ENCODE measurements at regions of chr9 and their contacts with region 1.

Region 1: DNA sequence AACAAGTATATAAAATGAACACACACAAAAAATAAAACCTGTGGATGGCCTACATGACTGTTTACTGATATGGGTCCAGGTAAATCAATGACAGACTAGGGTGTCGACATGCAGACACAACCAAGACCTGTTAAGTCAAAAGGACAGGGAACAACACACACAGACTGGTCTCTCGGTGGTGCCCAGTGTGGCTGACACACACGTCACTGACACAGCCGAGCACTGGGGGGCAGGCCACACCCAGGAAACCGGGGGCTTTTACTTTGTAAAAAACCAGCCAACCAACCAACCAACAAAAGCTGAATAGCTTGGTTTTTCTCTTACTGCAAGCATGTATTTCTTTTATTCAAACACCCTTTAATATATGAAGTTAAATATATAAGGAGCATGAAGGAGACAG is 5.0 kb downstream of the FAM163B start:
- DNase-seq: peak in 6 of 9 donors; percentile 10 to 33 (median 24)
- ATAC-seq: no peak
- H3K4me3 ChIP-seq: no peak overlapping the region
- H3K4me3 Mint-ChIP-seq: no peak overlapping the region
- H3K27ac ChIP-seq: no peak overlapping the region
- H3K27ac Mint-ChIP-seq: peak overlapping the region in 2 of 9 donors; percentile 20 to 38
- H3K4me1 ChIP-seq: no peaks in the 10 kb centered on the region
- H3K4me1 Mint-ChIP-seq: peaks cover 0 to 11% (median 8%) of the 10 kb centered on the region in 7 donors
- H3K27me3 ChIP-seq: peaks cover 0 to 7% of the 10 kb centered on the region in 2 donors
- H3K27me3 Mint-ChIP-seq: peaks cover 6 to 17% (median 14%) of the 10 kb centered on the region in 5 donors

Region 2: GRCh38 chr9:133715866-133716563 is 111.8 kb after region 1 on chr9:
- CTCF ChIA-PET with region 1: no interaction called
- POLR2A ChIA-PET with region 1: no interaction called
- intact Hi-C with region 1: loop called in 1 of 2 experiments (anchors 1 kb)
- DNase-seq: peak in 7 of 9 donors; percentile 36 to 63 (median 47)
- ATAC-seq: peak; percentile 62
- H3K4me3 ChIP-seq: no peak overlapping the region
- H3K4me3 Mint-ChIP-seq: no peak overlapping the region
- H3K27ac ChIP-seq: no peak overlapping the region
- H3K27ac Mint-ChIP-seq: peak overlapping the region in 5 of 9 donors; percentile 66 to 93 (median 78)
- H3K4me1 ChIP-seq: peaks cover 0 to 7% of the 10 kb centered on the region in 2 donors
- H3K4me1 Mint-ChIP-seq: peaks cover 0 to 7% (median 6%) of the 10 kb centered on the region in 7 donors
- H3K27me3 ChIP-seq: no peaks in the 10 kb centered on the region
- H3K27me3 Mint-ChIP-seq: no peaks in the 10 kb centered on the region